Testis (tissue), 5 donors: ENCODE measurements at regions of chr19 and their contacts with region 1.

Region 1: DNA sequence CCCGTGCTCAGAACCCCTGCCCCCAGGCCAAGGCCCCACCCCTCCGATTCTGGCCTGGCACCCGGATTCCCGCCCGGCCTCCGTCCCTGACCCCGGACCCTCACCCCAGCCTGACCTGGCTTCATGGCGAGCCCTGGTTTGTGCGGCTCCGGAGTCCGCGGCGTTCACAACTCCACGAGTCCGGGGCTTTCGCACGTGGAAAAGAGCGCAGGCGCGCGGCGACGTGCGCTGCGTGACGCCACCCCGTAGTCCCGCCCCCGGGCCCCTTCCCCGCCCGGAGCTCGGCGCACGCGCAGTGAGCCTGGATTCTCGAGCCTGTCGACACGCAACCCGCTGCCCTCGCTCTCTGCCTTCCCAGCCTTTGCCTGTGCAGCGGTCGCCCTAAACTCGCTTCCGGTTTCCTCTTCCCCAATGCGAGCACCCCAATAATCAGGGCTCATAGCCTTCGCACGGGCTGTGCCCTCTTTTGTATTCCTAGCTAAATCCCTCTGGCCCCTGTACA is at the start of gene FBL:
- DNase-seq: peak; percentile 96
- H3K4me3 ChIP-seq: peak within 1 kb of the TSS; percentile 77 to 87
- H3K27ac ChIP-seq: peak within 1 kb of the TSS; percentile 73 to 85
- H3K4me1 ChIP-seq: peaks cover 50% of the 10 kb centered on the region
- H3K27me3 ChIP-seq: no peaks in the 10 kb centered on the region
- CTCF ChIP-seq: no peak
- POLR2A ChIP-seq: peak; percentile 78
- total RNA-seq, gene FBL: 236 to 301 TPM

Region 2: DNA sequence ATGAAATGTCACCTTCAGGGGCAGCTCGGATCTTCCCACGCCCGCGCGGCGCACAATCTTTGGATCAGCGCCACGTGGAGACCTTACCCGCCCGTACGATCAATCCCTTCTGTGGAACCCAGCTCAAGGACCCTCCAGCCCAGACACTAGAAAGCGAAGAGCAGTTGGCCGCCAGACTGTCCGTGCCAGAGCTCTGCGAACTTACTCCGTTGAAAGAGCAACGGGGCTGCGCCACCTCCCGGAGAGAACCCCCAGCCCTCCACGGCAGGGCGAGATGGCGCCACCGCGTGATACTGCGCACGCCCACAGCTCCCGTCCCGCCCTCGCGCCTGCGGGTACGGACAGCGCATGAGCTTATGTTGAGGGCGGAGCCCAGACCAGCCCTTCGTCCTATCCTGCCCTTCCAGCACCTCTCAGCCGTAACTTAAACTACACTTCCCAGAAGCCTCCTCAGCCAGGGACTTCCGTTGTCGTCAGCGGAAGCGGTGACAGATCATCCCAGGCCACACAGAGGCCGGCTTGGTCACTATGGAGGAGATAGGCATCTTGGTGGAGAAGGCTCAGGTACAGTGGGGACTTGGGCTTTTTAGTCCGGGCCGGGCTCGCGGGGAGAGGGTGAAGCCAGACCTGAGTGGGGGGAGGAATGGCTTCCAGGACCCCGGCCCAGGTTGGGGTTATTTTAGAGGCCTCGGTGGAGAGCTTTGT is 124.6 kb after region 1 on chr19 and contains the start of gene PSMC4:
- intact Hi-C with region 1: loop called (anchors 10 kb)
- DNase-seq: peak; percentile 97
- H3K4me3 ChIP-seq: peak within 1 kb of the TSS; percentile 64 to 94
- H3K27ac ChIP-seq: peak within 1 kb of the TSS; percentile 71 to 90
- H3K4me1 ChIP-seq: peaks cover 9% of the 10 kb centered on the region
- H3K27me3 ChIP-seq: no peaks in the 10 kb centered on the region
- CTCF ChIP-seq: peak; percentile 51 to 68 (median 55)
- POLR2A ChIP-seq: peak; percentile 43
- total RNA-seq, gene PSMC4: 73.0 to 77.9 TPM